ENCODE measurements at regions of chr1 and their contacts with region 1.

Region 1: GRCh38 chr1:26541816-26542711 is 12.5 kb downstream of the RPS6KA1 start:
- DNase-seq: peak; percentile 73
- H3K4me3 Mint-ChIP-seq: peak overlapping the region; percentile 76
- H3K27ac Mint-ChIP-seq: peak overlapping the region; percentile 95
- H3K4me1 Mint-ChIP-seq: peaks cover 85% of the 10 kb centered on the region
- H3K27me3 Mint-ChIP-seq: no peaks in the 10 kb centered on the region

Region 2: GRCh38 chr1:26284597-26285360 is 257.3 kb before region 1 on chr1:
- intact Hi-C with region 1: loop called (anchors 5 kb)
- DNase-seq: peak; percentile 88
- H3K4me3 Mint-ChIP-seq: peak overlapping the region; percentile 81
- H3K27ac Mint-ChIP-seq: peak overlapping the region; percentile 97
- H3K4me1 Mint-ChIP-seq: peaks cover 70% of the 10 kb centered on the region
- H3K27me3 Mint-ChIP-seq: no peaks in the 10 kb centered on the region

Region 3: DNA sequence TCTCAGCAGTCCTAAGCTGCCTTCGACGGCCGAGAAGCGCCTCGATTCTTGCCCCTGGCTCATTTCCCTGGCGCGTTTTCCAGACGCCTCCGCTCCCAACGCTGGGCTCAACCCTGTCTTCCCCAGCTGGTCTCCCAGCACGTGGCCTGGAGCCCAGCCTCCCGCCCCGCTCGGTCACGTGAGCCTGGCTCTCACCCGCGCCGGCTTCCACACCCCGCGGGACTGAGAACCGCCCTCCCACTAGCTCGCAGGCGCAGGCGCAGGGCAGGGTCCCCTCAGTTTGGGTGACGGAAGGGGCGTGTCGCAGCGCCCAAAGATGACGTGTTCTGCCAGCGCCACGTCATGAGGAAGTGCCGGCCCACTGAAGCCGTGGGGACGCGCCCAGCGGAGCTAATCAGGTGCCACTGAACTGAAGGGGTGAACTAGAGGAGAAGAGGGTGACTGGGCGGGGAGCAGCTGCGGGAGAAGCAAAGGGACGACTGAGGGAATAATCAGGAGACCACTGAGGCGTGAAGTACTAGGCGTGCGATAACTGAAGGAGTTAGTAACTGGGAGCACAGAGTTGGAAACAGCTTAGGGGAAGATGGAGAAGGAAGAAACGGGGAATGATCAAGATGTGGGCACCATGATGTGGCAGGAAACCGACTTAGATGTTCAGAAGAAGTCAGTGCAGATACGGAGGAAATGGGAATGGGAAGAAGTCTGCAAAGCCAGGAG is 109.9 kb before region 1 on chr1 and contains the start of gene DHDDS:
- intact Hi-C with region 1: loop called (anchors 1 kb)
- DNase-seq: peak; percentile 98
- H3K4me3 Mint-ChIP-seq: peak within 1 kb of the TSS; percentile 94
- H3K27ac Mint-ChIP-seq: peak within 1 kb of the TSS; percentile 89
- H3K4me1 Mint-ChIP-seq: peaks cover 18% of the 10 kb centered on the region
- H3K27me3 Mint-ChIP-seq: peaks cover 12% of the 10 kb centered on the region
- total RNA-seq, gene DHDDS: 58.4 and 60.9 TPM in 2 replicates

Region 4: DNA sequence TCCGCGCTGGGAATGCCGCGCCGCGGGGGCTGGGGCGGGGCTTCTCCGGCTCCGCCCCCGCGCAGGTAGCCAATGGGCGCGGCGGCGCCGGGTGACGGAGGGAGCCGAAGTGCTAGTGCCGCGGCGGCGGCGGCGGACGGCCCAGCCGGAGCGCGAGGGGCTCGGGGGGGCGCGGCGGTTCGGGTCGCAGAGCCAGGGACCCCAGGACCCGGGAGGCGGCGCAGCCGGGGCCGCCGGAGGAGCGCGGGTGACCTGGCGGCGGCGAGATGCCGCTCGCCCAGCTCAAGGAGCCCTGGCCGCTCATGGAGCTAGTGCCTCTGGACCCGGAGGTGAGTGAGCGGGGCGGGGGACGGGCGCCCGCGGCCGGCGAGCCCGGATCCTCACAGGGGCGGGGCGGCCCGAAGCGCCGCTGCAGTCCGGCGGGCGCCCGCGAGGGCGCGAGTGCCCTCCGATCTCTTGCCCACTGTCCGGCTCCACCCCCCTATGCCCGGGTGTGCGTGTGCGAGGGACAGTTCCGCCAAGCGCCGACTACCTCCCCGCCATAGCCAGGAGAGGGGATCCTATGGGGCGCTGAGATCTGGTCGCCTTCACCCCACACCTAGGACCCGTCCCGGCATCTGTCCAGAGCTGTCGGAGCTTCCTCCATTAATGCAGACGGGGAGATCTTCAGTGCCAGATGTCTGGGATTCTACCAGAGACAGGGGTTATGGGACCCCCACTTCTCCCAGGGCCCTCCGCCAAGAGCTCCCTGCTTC is 12.2 kb before region 1 on chr1 and contains the start of gene RPS6KA1:
- intact Hi-C with region 1: loop called (anchors 1 kb)
- DNase-seq: peak; percentile 70
- H3K4me3 Mint-ChIP-seq: peak within 1 kb of the TSS; percentile 94
- H3K27ac Mint-ChIP-seq: peak within 1 kb of the TSS; percentile 93
- H3K4me1 Mint-ChIP-seq: peaks cover 42% of the 10 kb centered on the region
- H3K27me3 Mint-ChIP-seq: peaks cover 2% of the 10 kb centered on the region
- total RNA-seq, gene RPS6KA1: 324 and 331 TPM in 2 replicates

Region 5: GRCh38 chr1:26723013-26723991 is 181.2 kb after region 1 on chr1:
- intact Hi-C with region 1: loop called (anchors 1 kb)
- DNase-seq: peak; percentile 25
- H3K4me3 Mint-ChIP-seq: peak overlapping the region; percentile 55
- H3K27ac Mint-ChIP-seq: peak overlapping the region; percentile 35
- H3K4me1 Mint-ChIP-seq: peaks cover 82% of the 10 kb centered on the region
- H3K27me3 Mint-ChIP-seq: no peaks in the 10 kb centered on the region

Region 6: GRCh38 chr1:26864610-26865527 is 322.8 kb after region 1 on chr1:
- intact Hi-C with region 1: loop called (anchors 1 kb)
- DNase-seq: peak; percentile 96
- H3K4me3 Mint-ChIP-seq: peak overlapping the region; percentile 98
- H3K27ac Mint-ChIP-seq: peak overlapping the region; percentile 98
- H3K4me1 Mint-ChIP-seq: peaks cover 32% of the 10 kb centered on the region
- H3K27me3 Mint-ChIP-seq: no peaks in the 10 kb centered on the region

Measured in activated T-helper 1 cell treated with anti-CD3 and anti-CD28 coated beads, Interleukin-12 subunit alpha, Interleukin-12 subunit beta, Interleukin-2, Interleukin-4 antibody, amounts not matched to agents 30 ng/mL and 10 ng/mL and 1 ng/mL, durations not matched to agents 14 hours and 24 hours and 36 hours (primary cell).